MCF 10A (cell line): ENCODE measurements at regions of chr11 and their contacts with region 1.

Region 1: DNA sequence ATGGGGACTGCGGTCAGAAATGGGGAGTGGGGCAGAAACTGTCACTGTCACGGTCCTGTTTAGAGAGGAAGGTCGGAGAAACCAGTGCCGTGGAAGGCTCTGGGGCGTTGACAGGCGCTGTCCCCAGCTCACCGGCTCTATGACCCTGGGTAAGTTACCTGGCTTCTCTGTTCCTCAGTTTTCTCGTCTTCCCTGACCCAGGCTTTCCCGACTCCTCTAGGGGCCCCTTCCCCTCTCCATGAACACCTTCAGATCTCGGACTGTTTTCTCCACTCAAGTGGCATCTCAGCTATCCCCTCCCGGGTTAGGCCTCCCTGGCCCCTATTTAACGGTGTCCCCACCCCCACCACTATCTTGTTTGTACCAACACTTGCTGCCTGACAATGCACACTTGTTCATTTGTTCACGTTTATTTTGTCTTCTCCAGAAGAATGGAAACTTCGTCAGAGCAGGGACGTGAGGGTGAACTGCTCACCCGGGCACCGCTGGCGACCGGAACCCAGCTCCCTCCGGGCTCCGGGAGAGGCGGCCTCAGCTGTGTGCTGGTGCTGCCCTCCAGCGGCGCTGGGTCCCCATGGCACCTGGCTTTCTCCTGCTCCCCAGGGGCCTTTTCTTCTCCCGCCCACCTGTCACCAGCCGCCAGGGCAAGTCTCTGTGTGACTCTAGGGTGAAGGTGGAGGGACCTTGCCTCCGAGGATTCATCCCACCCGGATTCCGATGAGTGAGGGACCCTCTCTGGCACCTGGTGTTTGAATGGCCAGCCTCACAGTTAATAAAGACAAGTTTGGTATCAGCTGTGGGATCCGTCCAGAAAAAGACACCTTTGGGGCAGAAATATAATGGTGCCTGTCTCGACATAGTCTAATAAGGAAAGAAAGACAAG is 33.1 kb upstream of the SLC35C1 start:
- DNase-seq: peak; percentile 79
- H3K4me3 Mint-ChIP-seq: peak overlapping the region; percentile 82
- H3K27ac Mint-ChIP-seq: peak overlapping the region; percentile 70
- H3K4me1 Mint-ChIP-seq: peaks cover 12% of the 10 kb centered on the region
- H3K27me3 Mint-ChIP-seq: no peaks in the 10 kb centered on the region
- CTCF ChIP-seq: peak; percentile 95

Region 2: GRCh38 chr11:45332276-45332934 is 439.4 kb before region 1 on chr11:
- CTCF ChIA-PET with region 1: interaction called, 70 read pairs
- POLR2A ChIA-PET with region 1: no interaction called
- intact Hi-C with region 1: no loop called
- DNase-seq: peak; percentile 52
- H3K4me3 Mint-ChIP-seq: no peak overlapping the region
- H3K27ac Mint-ChIP-seq: no peak overlapping the region
- H3K4me1 Mint-ChIP-seq: peaks cover 6% of the 10 kb centered on the region
- H3K27me3 Mint-ChIP-seq: peaks cover 20% of the 10 kb centered on the region
- CTCF ChIP-seq: peak; percentile 84

Region 3: DNA sequence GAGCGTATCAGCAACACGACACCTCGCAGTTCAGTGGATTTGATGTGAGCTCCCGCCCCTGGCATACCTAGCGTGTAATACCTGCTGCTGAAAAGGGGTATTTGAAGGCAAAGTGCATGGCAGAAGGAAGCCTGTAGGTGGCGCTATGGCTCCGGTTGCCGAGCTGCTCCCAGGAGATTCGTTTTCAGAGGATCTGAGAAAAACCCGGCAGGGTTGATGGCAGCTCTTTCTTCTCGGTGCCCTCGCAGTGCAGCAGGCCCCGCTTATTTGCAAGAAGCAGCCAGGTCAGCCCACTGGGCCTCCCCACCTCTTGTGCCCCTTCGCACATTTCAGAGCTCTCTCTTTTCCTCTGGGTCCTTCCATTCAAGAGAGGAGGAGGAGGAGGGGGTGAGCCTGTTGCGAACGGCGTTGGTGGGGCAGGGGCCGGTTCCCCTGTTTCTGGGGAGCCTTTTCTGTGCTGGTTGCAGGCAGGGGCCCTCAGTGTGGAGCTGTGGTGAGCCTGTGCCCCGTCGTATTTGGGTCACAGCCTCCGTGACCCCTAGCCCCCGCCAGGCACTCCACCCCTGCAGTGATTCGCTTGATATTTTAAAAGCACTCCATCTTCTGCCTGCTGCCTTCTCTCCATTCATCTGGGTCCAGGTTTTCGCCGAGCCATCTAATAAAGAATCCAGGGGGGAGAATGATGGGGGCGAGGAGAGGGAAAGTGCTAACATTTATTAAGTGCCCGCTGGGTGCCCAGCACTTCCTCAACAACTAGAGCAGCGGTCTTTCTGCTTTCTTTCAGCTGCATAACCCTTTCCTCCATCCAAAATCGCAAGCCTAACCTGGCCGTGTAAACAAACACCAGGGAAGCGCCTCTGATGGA is 400.3 kb before region 1 on chr11:
- CTCF ChIA-PET with region 1: interaction called, 86 read pairs
- POLR2A ChIA-PET with region 1: interaction called, 3 read pairs
- intact Hi-C with region 1: loop called (anchors 1 kb)
- DNase-seq: peak; percentile 66
- H3K4me3 Mint-ChIP-seq: no peak overlapping the region
- H3K27ac Mint-ChIP-seq: no peak overlapping the region
- H3K4me1 Mint-ChIP-seq: no peaks in the 10 kb centered on the region
- H3K27me3 Mint-ChIP-seq: peaks cover 35% of the 10 kb centered on the region
- CTCF ChIP-seq: peak; percentile 94

Region 4: GRCh38 chr11:45538363-45538762 is 233.4 kb before region 1 on chr11:
- CTCF ChIA-PET with region 1: no interaction called
- POLR2A ChIA-PET with region 1: no interaction called
- intact Hi-C with region 1: loop called (anchors 5 kb)
- DNase-seq: no peak
- H3K4me3 Mint-ChIP-seq: no peak overlapping the region
- H3K27ac Mint-ChIP-seq: no peak overlapping the region
- H3K4me1 Mint-ChIP-seq: no peaks in the 10 kb centered on the region
- H3K27me3 Mint-ChIP-seq: peaks cover 18% of the 10 kb centered on the region
- CTCF ChIP-seq: no peak

Region 5: DNA sequence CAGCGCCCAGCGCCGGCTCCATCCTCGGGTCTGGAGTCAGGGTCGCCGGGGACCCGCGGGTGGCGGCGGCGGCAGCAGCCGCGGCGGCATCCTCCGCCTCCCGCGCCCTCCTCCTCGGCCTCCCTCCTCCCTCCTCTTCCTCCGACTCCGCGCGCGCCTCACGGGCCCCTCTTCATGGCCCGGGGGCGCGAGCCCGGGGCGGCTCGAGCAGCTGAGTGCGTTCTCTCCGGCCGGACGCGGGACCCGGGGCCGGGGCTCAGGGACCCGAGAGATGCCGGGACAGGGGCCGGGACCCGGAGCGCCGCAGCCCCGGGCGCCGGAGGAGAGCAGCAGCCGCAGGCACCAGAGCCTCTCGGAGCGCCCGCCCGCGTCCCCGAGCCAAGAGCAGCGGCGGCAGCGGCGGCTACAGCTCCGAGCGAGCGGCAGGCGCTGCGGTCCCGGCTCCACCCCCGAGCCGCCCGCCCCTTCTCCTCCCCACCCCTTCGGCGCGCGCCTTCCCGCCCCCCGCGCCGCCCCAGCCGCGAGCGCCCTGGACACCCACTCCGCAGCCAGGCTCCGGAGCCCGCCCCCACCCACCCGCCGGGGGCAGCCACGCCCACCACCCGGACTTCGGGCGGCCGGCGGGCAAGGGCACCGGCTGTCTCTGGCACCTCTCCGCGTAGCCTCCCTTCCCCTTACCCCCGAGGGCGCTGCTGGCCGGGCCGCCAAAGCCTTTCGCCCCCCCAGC is 106.4 kb before region 1 on chr11 and contains the start of gene CHST1:
- CTCF ChIA-PET with region 1: interaction called, 62 read pairs
- POLR2A ChIA-PET with region 1: no interaction called
- intact Hi-C with region 1: no loop called
- DNase-seq: no peak
- H3K4me3 Mint-ChIP-seq: peak within 1 kb of the TSS; percentile 50
- H3K27ac Mint-ChIP-seq: no peak within 1 kb of the TSS
- H3K4me1 Mint-ChIP-seq: no peaks in the 10 kb centered on the region
- H3K27me3 Mint-ChIP-seq: peaks cover 55% of the 10 kb centered on the region
- CTCF ChIP-seq: no peak
- total RNA-seq, gene CHST1: not detected in 2 replicates

Region 6: DNA sequence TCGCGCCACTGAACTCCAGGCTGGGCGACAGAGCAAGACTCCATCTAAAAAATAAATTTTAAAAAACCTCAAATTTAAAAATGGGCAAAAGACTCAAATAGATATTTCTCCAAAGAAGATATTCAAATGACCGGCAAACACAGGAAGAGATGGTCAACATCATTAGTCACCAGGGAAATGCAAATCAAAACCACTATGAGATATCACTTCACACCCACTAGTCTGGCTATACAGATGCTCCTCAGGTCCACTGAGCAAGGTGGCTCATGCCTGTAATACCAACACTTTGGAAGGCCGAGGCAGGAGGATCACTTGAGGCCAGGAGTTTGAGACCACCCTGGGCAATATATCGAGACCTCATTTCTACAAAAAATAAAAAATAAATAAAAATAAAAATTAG is 10.1 kb before region 1 on chr11:
- CTCF ChIA-PET with region 1: interaction called, 27 read pairs
- POLR2A ChIA-PET with region 1: no interaction called
- intact Hi-C with region 1: no loop called
- DNase-seq: no peak
- H3K4me3 Mint-ChIP-seq: no peak overlapping the region
- H3K27ac Mint-ChIP-seq: no peak overlapping the region
- H3K4me1 Mint-ChIP-seq: peaks cover 10% of the 10 kb centered on the region
- H3K27me3 Mint-ChIP-seq: no peaks in the 10 kb centered on the region
- CTCF ChIP-seq: no peak